ENCODE measurements at regions of chr5 and their contacts with region 1.

Region 1: GRCh38 chr5:86688406-86688805 is 70.7 kb downstream of the COX7C start:
- DNase-seq: no peak
- H3K4me3 Mint-ChIP-seq: no peak overlapping the region
- H3K27ac Mint-ChIP-seq: no peak overlapping the region
- H3K4me1 Mint-ChIP-seq: no peaks in the 10 kb centered on the region
- H3K27me3 Mint-ChIP-seq: no peaks in the 10 kb centered on the region
- CTCF ChIP-seq: no peak

Region 2: GRCh38 chr5:87015901-87016300 is 327.5 kb after region 1 on chr5:
- CTCF ChIA-PET with region 1: no interaction called
- intact Hi-C with region 1: loop called (anchors 10 kb)
- DNase-seq: no peak
- H3K4me3 Mint-ChIP-seq: no peak overlapping the region
- H3K27ac Mint-ChIP-seq: no peak overlapping the region
- H3K4me1 Mint-ChIP-seq: peaks cover 21% of the 10 kb centered on the region
- H3K27me3 Mint-ChIP-seq: no peaks in the 10 kb centered on the region
- CTCF ChIP-seq: no peak